A673 (cell line): ENCODE measurements at regions of chr5 and their contacts with region 1.

Region 1: DNA sequence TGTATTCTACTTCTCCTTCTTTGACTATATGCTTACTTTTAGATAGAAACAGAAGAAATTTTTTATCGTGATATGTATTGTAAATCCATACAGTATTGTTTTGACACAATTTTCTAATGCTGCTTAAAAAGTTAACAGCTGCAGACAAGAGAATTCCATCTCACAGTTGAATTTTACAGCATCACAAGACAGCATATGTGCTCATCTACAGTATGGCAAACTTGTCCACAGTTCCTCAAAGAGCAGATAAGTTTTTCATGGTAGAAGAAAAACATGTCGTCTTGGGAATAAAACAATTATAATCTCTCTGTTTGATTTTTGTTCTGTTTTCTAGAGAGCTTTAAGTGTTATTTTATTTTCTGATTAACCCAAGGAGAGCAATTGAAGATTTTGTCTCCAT is 438.5 kb upstream of the NUDT12 start:
- DNase-seq: no peak
- H3K4me3 ChIP-seq: no peak overlapping the region
- H3K27ac ChIP-seq: no peak overlapping the region
- H3K4me1 ChIP-seq: peaks cover 4% of the 10 kb centered on the region
- H3K27me3 ChIP-seq: no peaks in the 10 kb centered on the region
- CTCF ChIP-seq: no peak

Region 2: GRCh38 chr5:103808464-103809106 is 192.6 kb before region 1 on chr5:
- CTCF ChIA-PET with region 1: no interaction called
- POLR2A ChIA-PET with region 1: no interaction called
- intact Hi-C with region 1: no loop called
- DNase-seq: peak; percentile 80
- H3K4me3 ChIP-seq: no peak overlapping the region
- H3K27ac ChIP-seq: no peak overlapping the region
- H3K4me1 ChIP-seq: peaks cover 5% of the 10 kb centered on the region
- H3K27me3 ChIP-seq: no peaks in the 10 kb centered on the region
- CTCF ChIP-seq: peak; percentile 97

Region 3: GRCh38 chr5:104048231-104048630 is 47.1 kb after region 1 on chr5:
- CTCF ChIA-PET with region 1: interaction called, 10 read pairs
- POLR2A ChIA-PET with region 1: no interaction called
- intact Hi-C with region 1: no loop called
- DNase-seq: no peak
- H3K4me3 ChIP-seq: no peak overlapping the region
- H3K27ac ChIP-seq: no peak overlapping the region
- H3K4me1 ChIP-seq: peaks cover under 1% of the 10 kb centered on the region
- H3K27me3 ChIP-seq: no peaks in the 10 kb centered on the region
- CTCF ChIP-seq: no peak

Region 4: GRCh38 chr5:104186100-104186499 is 185.0 kb after region 1 on chr5:
- CTCF ChIA-PET with region 1: no interaction called
- POLR2A ChIA-PET with region 1: no interaction called
- intact Hi-C with region 1: no loop called
- DNase-seq: peak; percentile 17
- H3K4me3 ChIP-seq: no peak overlapping the region
- H3K27ac ChIP-seq: no peak overlapping the region
- H3K4me1 ChIP-seq: no peaks in the 10 kb centered on the region
- H3K27me3 ChIP-seq: no peaks in the 10 kb centered on the region
- CTCF ChIP-seq: no peak